AG04450 (cell line): ENCODE measurements at regions of chr1 and their contacts with region 1.

Region 1: GRCh38 chr1:87131809-87132283 is 196.8 kb upstream of the LMO4 start:
- DNase-seq: no peak
- H3K4me3 ChIP-seq: peak overlapping the region; percentile 54
- H3K27ac ChIP-seq: no peak overlapping the region
- H3K27me3 ChIP-seq: no peaks in the 10 kb centered on the region
- CTCF ChIP-seq: peak; percentile 93

Region 2: DNA sequence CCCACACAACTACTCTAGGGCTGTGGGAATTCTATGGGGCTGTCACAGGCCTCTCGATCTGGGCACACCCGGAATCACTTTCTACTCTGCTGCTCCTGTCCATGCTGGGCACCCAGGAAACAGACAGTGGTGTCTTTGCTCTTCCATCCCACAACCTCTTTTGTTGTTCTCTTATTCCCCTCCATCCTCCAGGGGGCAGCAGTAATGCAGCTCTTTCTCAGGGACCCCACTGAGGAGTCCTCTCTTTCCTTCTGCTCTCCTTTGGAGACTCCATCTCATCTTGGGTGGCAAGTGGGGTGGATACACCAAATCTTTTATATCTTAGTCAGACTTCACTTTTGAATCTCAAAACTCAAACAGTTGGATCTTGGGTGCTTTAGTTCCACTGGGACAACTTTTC is 11.1 kb before region 1 on chr1:
- CTCF ChIA-PET with region 1: interaction called, 26 read pairs
- POLR2A ChIA-PET with region 1: no interaction called
- DNase-seq: no peak
- H3K4me3 ChIP-seq: no peak overlapping the region
- H3K27ac ChIP-seq: no peak overlapping the region
- H3K27me3 ChIP-seq: no peaks in the 10 kb centered on the region
- CTCF ChIP-seq: peak; percentile 32; the same call in 1 of the 2 replicates